ENCODE measurements at regions of chr11 and their contacts with region 1.

Region 1: GRCh38 chr11:125404776-125405435 is 91.2 kb downstream of the FEZ1 start:
- DNase-seq: peak; percentile 38 to 79 (median 67)
- ATAC-seq: peak; percentile 94
- H3K4me3 ChIP-seq: no peak overlapping the region
- H3K4me3 Mint-ChIP-seq: no peak overlapping the region
- H3K27ac ChIP-seq: no peak overlapping the region
- H3K27ac Mint-ChIP-seq: no peak overlapping the region
- H3K4me1 ChIP-seq: no peaks in the 10 kb centered on the region
- H3K4me1 Mint-ChIP-seq: peaks cover 6% of the 10 kb centered on the region
- H3K27me3 ChIP-seq: peaks cover 0 to 7% of the 10 kb centered on the region in 2 experiments
- H3K27me3 Mint-ChIP-seq: peaks cover 60% of the 10 kb centered on the region
- CTCF ChIP-seq: peak; percentile 88

Region 2: DNA sequence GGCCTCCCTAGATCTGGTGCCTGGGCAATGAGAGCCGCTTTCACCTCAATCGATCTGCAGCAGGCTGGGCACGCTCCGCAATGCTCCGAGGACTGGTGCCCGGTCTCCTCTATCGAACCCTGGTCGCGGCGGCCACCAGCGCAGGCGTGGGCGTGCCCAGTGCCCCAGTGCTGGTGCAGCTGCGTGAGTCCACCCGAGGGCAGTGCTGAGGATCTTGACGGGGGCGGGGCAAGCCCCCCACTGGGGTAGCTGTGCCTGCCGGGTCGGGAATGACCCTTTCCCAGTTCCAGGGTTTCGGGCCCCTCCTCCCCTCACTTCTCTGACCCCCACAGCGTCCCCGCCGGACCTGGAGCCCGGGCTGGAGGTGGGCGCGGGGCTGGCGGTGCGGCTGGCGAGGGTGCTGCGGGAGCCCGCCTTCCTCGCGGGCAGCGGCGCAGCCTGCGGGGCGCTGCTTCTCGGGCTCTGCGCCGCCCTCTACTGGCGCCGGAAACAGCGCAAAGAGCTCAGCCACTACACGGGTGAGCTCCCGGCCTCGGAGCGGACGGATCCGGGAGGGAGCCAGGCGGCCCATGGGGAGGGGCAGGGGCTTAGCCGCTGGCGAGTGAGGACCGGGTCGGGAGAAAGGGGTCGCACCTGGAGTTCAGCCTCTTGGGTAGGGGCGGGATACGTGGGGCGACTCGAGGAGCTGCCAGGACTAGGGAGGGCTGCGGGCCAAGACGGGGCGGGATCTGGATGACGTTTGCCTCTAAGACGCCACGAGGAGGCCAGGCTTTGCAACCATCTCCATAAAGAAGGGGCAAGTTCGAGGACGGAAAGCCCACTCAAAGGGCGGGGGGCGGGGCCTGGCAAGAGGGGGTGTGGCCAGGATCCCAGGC is 528.7 kb before region 1 on chr11:
- CTCF ChIA-PET with region 1: no interaction called
- POLR2A ChIA-PET with region 1: no interaction called
- intact Hi-C with region 1: no loop called
- DNase-seq: peak; percentile 60 to 90 (median 76)
- ATAC-seq: peak; percentile 91
- H3K4me3 ChIP-seq: peak overlapping the region; percentile 75 to 88
- H3K4me3 Mint-ChIP-seq: peak overlapping the region; percentile 93
- H3K27ac ChIP-seq: peak overlapping the region; percentile 77 to 96
- H3K27ac Mint-ChIP-seq: peak overlapping the region; percentile 92
- H3K4me1 ChIP-seq: peaks cover 16% of the 10 kb centered on the region
- H3K4me1 Mint-ChIP-seq: peaks cover 24% of the 10 kb centered on the region
- H3K27me3 ChIP-seq: no peaks in the 10 kb centered on the region
- H3K27me3 Mint-ChIP-seq: peaks cover 27% of the 10 kb centered on the region
- CTCF ChIP-seq: peak; percentile 65

Region 3: GRCh38 chr11:125429166-125429707 is 24.3 kb after region 1 on chr11:
- CTCF ChIA-PET with region 1: interaction called, 20 read pairs
- POLR2A ChIA-PET with region 1: no interaction called
- intact Hi-C with region 1: no loop called
- DNase-seq: peak in 8 of 9 experiments; percentile 6 to 59 (median 47)
- ATAC-seq: peak; percentile 29
- H3K4me3 ChIP-seq: no peak overlapping the region
- H3K4me3 Mint-ChIP-seq: no peak overlapping the region
- H3K27ac ChIP-seq: no peak overlapping the region
- H3K27ac Mint-ChIP-seq: no peak overlapping the region
- H3K4me1 ChIP-seq: no peaks in the 10 kb centered on the region
- H3K4me1 Mint-ChIP-seq: peaks cover 8% of the 10 kb centered on the region
- H3K27me3 ChIP-seq: peaks cover 0 to 2% of the 10 kb centered on the region in 2 experiments
- H3K27me3 Mint-ChIP-seq: peaks cover 24% of the 10 kb centered on the region
- CTCF ChIP-seq: no peak

Measured in CD8-positive, alpha-beta T cell (primary cell).